Ascending aorta (tissue), 2 donors: ENCODE measurements at regions of chr20 and their contacts with region 1.

Region 1: DNA sequence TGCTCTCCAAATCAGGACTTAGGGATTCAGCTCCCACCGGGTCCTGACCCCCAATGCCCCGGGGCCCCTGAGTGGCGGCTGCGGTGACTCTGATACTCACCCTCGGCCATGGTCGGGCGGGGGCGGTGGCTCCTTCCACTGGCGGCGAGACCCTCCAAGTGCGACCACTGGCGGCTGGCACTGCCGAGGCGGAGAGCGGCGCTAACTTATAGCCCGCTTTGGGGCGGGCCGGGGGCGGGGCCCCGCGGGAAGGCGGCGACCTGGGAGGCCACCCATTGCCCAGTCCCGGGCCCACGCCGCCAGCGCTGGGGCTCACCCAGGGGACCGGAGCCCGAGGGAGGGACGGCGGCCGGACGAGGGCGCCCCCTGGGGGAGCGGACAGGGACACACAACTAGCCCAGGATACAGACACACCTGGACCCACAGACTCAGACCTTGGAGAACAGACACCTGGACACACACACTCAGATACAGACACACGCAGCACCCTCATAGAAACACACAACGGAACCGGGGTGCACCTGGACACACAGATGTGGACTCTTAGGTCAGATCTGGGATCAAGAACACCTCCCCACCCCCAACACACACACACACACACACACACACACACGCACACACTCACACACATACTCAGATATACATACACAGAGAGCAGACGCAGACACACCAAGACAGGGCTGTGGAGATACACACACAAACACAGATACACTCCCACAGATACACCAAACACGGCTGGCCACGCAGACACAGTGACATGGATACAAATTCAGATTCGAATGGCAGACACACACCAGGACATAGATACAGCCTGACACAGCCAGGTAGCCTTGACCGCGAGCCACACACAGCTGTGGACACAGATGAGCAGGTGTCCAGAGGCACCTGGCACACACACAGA is at the start of gene TGM2:
- DNase-seq: peak; percentile 42 to 91
- H3K4me3 ChIP-seq: peak within 1 kb of the TSS; percentile 62 to 75
- H3K27ac ChIP-seq: peak within 1 kb of the TSS; percentile 86 to 88
- H3K4me1 ChIP-seq: peaks cover 19 to 35% of the 10 kb centered on the region in 2 donors
- H3K27me3 ChIP-seq: no peaks in the 10 kb centered on the region
- CTCF ChIP-seq: peak; percentile 87 to 95 (median 92)
- total RNA-seq, gene TGM2: 529 TPM

Region 2: DNA sequence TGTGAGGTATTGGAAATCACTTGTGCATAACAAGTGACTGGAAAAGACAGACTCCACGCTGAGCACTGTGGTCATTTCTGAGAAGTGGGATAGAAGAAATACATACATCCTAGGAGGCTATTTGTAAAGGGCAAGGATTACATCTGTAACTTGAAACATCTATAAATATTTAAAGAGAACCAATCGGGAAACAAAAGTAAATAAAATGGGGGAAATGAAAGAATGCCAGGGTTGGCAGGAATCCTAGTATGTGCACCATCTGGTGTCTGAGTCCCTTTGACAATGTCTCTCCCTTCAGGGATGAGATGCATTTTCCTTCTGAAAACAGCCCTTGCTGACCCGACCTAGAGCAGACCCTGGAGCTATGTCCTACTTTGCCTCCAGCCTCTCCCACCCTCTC is 209.3 kb before region 1 on chr20:
- intact Hi-C with region 1: no loop called
- DNase-seq: no peak
- H3K4me3 ChIP-seq: no peak overlapping the region
- H3K27ac ChIP-seq: no peak overlapping the region
- H3K4me1 ChIP-seq: no peaks in the 10 kb centered on the region
- H3K27me3 ChIP-seq: no peaks in the 10 kb centered on the region
- CTCF ChIP-seq: no peak

Region 3: GRCh38 chr20:38073307-38074071 is 91.8 kb before region 1 on chr20:
- intact Hi-C with region 1: loop called (anchors 1 kb)
- DNase-seq: peak in 1 of 2 donors; percentile 86
- H3K4me3 ChIP-seq: no peak overlapping the region
- H3K27ac ChIP-seq: peak overlapping the region; percentile 86
- H3K4me1 ChIP-seq: peaks cover 18 to 34% of the 10 kb centered on the region in 2 donors
- H3K27me3 ChIP-seq: no peaks in the 10 kb centered on the region
- CTCF ChIP-seq: peak; percentile 64 to 88 (median 80)

Region 4: GRCh38 chr20:38152621-38153231 is 12.6 kb before region 1 on chr20:
- intact Hi-C with region 1: loop called (anchors 1 kb)
- DNase-seq: peak; percentile 85 to 97
- H3K4me3 ChIP-seq: peak overlapping the region; percentile 16 to 19
- H3K27ac ChIP-seq: peak overlapping the region; percentile 88 to 89
- H3K4me1 ChIP-seq: peaks cover 13 to 34% of the 10 kb centered on the region in 2 donors
- H3K27me3 ChIP-seq: no peaks in the 10 kb centered on the region
- CTCF ChIP-seq: no peak

Region 5: GRCh38 chr20:38751360-38751976 is 586.1 kb after region 1 on chr20:
- intact Hi-C with region 1: no loop called
- DNase-seq: no peak
- H3K4me3 ChIP-seq: no peak overlapping the region
- H3K27ac ChIP-seq: no peak overlapping the region
- H3K4me1 ChIP-seq: peaks cover 0 to 4% of the 10 kb centered on the region in 2 donors
- H3K27me3 ChIP-seq: no peaks in the 10 kb centered on the region
- CTCF ChIP-seq: peak in 2 of 3 experiments; percentile 38 to 51